Mammary epithelial cell (primary cell): ENCODE measurements at regions of chr4 and their contacts with region 1.

Region 1: DNA sequence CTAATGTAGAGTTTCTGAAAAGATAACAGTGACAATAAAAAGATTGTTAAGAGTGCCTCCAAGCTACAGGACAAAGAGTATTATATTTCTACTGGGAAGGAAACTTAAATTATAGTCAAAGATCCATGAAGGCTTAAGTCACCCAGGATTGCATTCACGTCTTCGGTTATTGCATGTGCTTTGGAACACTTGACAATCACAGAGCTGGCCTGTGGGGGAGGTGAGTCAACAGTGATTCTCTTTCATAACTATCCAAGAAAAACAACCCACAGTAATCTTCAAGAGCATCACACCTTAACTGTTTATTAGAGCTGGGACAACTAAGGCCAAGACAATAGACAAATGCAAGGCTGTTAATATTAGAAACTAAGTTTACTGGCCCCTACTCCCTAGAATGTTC is 40.3 kb downstream of the PDGFC start:
- DNase-seq: peak; percentile 93
- H3K4me3 ChIP-seq: no peak overlapping the region
- H3K27ac ChIP-seq: peak overlapping the region; percentile 97
- H3K4me1 ChIP-seq: peaks cover 46% of the 10 kb centered on the region
- H3K27me3 ChIP-seq: no peaks in the 10 kb centered on the region
- CTCF ChIP-seq: no peak

Region 2: GRCh38 chr4:156654410-156654809 is 276.9 kb before region 1 on chr4:
- CTCF ChIA-PET with region 1: no interaction called
- dilution Hi-C with region 1: no loop called
- in situ Hi-C with region 1: no loop called
- intact Hi-C with region 1: no loop called
- DNase-seq: no peak
- H3K4me3 ChIP-seq: no peak overlapping the region
- H3K27ac ChIP-seq: no peak overlapping the region
- H3K4me1 ChIP-seq: peaks cover 7% of the 10 kb centered on the region
- H3K27me3 ChIP-seq: no peaks in the 10 kb centered on the region
- CTCF ChIP-seq: no peak

Region 3: GRCh38 chr4:156779774-156780173 is 151.5 kb before region 1 on chr4:
- CTCF ChIA-PET with region 1: no interaction called
- dilution Hi-C with region 1: no loop called
- in situ Hi-C with region 1: loop called in 1 of 2 experiments (anchors 10 kb)
- intact Hi-C with region 1: loop called (anchors 2 kb)
- DNase-seq: peak; percentile 76
- H3K4me3 ChIP-seq: no peak overlapping the region
- H3K27ac ChIP-seq: peak overlapping the region; percentile 98
- H3K4me1 ChIP-seq: peaks cover 70% of the 10 kb centered on the region
- H3K27me3 ChIP-seq: no peaks in the 10 kb centered on the region
- CTCF ChIP-seq: no peak

Region 4: GRCh38 chr4:156799121-156799589 is 132.1 kb before region 1 on chr4:
- CTCF ChIA-PET with region 1: no interaction called
- dilution Hi-C with region 1: no loop called
- in situ Hi-C with region 1: no loop called
- intact Hi-C with region 1: loop called (anchors 1 kb)
- DNase-seq: peak; percentile 60
- H3K4me3 ChIP-seq: peak overlapping the region in 1 of 3 experiments; percentile 2
- H3K27ac ChIP-seq: peak overlapping the region; percentile 88
- H3K4me1 ChIP-seq: peaks cover 38% of the 10 kb centered on the region
- H3K27me3 ChIP-seq: no peaks in the 10 kb centered on the region
- CTCF ChIP-seq: no peak

Region 5: DNA sequence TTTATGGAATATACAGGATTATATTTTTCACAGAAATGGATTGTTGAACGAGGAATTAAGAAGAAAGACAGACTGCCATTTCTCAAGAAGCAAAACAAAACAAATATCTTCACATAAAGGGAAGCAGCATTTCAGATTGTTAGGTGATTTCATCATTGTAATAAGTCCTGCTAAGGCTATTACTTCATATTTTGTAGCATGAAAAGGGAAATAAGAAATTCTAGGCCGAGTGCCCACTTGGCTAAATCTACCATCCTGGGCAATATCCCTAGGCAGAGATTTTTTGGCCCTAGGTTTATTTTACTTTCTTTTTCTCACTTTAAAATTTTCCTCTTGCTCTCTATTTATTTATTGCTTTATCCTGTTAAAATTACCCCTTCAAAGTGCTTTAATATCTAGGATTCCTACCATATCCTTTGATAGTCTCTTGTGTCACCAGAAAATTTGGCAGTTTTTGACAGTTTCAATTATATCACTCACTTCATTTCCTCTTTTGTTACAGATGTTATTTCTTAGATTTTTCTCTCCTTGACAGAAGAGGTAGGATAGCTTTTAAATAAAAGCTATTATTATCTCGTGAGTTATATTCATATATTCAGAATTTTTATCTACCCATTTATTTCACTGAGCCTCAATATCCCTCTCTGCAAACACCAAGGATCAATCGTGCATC is 101.9 kb before region 1 on chr4:
- CTCF ChIA-PET with region 1: no interaction called
- dilution Hi-C with region 1: no loop called
- in situ Hi-C with region 1: no loop called
- intact Hi-C with region 1: loop called (anchors 2 kb)
- DNase-seq: peak; percentile 12
- H3K4me3 ChIP-seq: peak overlapping the region in 1 of 3 experiments; percentile 20
- H3K27ac ChIP-seq: peak overlapping the region; percentile 68
- H3K4me1 ChIP-seq: peaks cover 29% of the 10 kb centered on the region
- H3K27me3 ChIP-seq: no peaks in the 10 kb centered on the region
- CTCF ChIP-seq: no peak

Region 6: GRCh38 chr4:156889616-156890594 is 41.4 kb before region 1 on chr4:
- CTCF ChIA-PET with region 1: no interaction called
- dilution Hi-C with region 1: no loop called
- in situ Hi-C with region 1: no loop called
- intact Hi-C with region 1: loop called (anchors 5 kb)
- DNase-seq: peak; percentile 72
- H3K4me3 ChIP-seq: peak overlapping the region in 1 of 3 experiments; percentile 22
- H3K27ac ChIP-seq: peak overlapping the region; percentile 56
- H3K4me1 ChIP-seq: peaks cover 20% of the 10 kb centered on the region
- H3K27me3 ChIP-seq: no peaks in the 10 kb centered on the region
- CTCF ChIP-seq: no peak

Region 7: GRCh38 chr4:156946516-156947424 is 15.5 kb after region 1 on chr4:
- CTCF ChIA-PET with region 1: interaction called, 6 read pairs
- dilution Hi-C with region 1: no loop called
- in situ Hi-C with region 1: no loop called
- intact Hi-C with region 1: loop called (anchors 1 kb)
- DNase-seq: peak; percentile 98
- H3K4me3 ChIP-seq: peak overlapping the region in 1 of 3 experiments; percentile 19
- H3K27ac ChIP-seq: peak overlapping the region; percentile 98
- H3K4me1 ChIP-seq: peaks cover 49% of the 10 kb centered on the region
- H3K27me3 ChIP-seq: no peaks in the 10 kb centered on the region
- CTCF ChIP-seq: no peak

Region 8: GRCh38 chr4:157012781-157013180 is 81.5 kb after region 1 on chr4:
- CTCF ChIA-PET with region 1: no interaction called
- dilution Hi-C with region 1: no loop called
- in situ Hi-C with region 1: no loop called
- intact Hi-C with region 1: no loop called
- DNase-seq: peak; percentile 44
- H3K4me3 ChIP-seq: no peak overlapping the region
- H3K27ac ChIP-seq: peak overlapping the region; percentile 43
- H3K4me1 ChIP-seq: peaks cover 29% of the 10 kb centered on the region
- H3K27me3 ChIP-seq: no peaks in the 10 kb centered on the region
- CTCF ChIP-seq: no peak